Right ventricle myocardium inferior (tissue), 1 donor: ENCODE measurements at regions of chr7 and their contacts with region 1.

Region 1: GRCh38 chr7:136868496-136869000 is at the start of gene CHRM2:
- DNase-seq: no peak
- ATAC-seq: peak; percentile 47
- total RNA-seq, gene CHRM2: 70.4 TPM

Region 2: DNA sequence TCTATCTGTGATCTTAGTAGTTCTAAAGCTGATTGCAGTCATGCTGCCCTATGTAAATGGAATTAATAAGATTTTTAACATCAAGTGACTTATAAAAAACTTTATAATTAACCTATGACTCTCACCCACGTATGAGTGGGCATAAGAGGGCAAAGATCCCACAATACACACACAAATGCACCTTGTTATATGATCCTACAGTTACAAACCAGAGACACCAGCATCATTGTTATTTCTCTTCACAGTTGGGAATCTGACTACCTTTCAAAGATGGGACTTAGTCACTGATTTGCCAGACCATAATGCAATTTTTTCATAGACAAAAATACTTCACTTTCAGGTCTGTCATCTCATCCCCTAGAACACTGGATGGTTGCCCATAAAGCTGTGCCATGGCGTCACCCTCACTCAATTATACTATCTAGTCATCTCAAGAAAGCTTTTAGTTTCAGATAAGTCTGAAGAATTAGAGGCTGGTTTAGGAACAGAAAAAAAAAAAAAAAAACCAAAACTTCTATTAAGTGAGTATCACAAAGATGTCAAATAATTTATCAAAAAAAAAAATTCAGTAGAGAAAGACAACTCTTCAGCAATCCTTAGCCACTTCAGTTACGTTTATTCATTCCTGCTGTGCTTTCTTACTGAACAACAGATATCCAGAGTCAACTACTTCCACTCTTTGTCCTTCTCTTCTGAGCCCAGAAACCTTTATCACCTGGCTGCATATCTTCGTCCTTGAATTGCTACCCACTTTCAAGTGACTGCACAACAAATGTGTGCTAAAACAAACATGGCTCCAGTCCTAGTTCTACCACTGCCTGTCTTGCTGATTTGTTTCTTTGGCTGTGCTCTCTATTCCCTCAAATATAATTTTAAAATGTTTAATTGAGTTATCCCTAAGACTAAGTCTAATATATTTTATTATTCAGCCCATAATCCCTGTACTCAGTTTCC is 175.1 kb before region 1 on chr7:
- intact Hi-C with region 1: loop called (anchors 10 kb)
- DNase-seq: no peak
- ATAC-seq: no peak

Region 3: DNA sequence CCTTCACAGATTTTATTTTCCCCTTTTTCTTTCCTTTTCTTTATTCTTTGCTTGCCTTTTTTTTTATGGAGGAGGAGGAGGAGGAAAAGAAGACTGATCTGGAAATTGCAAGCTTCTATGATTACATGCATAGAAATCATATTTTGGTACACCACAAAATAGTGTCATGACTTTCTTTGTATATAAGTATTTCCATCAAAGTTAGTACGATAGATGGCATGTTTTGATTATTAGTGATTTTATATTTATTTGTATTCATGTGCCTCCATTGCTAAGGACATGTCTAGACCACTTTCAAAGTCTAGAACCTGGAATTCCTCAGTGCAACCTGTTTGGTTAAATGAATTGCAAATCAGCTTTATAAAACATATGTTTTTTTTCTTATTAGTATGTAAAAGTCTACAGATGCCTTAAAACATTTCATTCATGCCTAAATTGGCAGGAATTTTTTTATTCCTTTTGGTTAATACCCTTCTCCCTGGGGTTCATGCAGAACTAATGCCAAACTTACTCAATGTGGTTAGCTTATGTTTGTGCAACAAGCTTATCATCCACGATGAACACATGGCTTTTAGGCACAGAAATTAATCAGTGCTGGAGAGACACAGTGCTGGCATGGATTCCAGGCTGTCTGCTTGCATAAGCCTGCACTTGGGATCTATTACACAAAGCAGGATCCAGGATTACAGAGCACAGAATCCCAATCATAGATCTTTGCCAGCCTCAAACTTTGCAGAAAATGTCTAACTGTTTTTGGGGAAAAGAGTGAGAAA is 213.0 kb after region 1 on chr7:
- intact Hi-C with region 1: loop called (anchors 2 kb)
- DNase-seq: peak; percentile 81
- ATAC-seq: peak; percentile 96